Panc1 (cell line): ENCODE measurements at regions of chr15 and their contacts with region 1.

Region 1: DNA sequence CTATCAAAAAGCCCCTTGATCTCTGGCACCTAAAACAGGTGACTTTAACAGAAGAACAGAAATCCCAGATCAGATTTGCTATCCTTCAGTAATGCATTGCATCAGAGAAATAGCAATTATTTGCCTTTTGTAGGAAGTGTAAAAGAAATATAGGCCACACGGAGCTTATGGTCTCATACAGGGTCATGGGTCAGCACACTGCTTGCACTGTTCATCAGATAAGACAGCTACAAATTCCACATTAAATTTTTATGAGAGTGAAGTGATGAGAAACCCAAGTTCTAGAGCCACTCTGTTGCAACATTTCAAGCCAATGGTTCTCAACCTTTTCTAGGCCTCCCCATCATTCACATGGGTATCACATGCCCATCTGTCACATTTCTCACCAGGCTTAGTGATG is 33.4 kb upstream of the TMEM87A start:
- DNase-seq: no peak
- ATAC-seq: no peak
- H3K4me3 ChIP-seq: no peak overlapping the region
- H3K27ac ChIP-seq: no peak overlapping the region
- H3K4me1 ChIP-seq: no peaks in the 10 kb centered on the region
- H3K27me3 ChIP-seq: no peaks in the 10 kb centered on the region
- CTCF ChIP-seq: no peak

Region 2: GRCh38 chr15:42273102-42273899 is 33.4 kb before region 1 on chr15 and contains the starts of genes GANC and TMEM87A:
- CTCF ChIA-PET with region 1: no interaction called
- POLR2A ChIA-PET with region 1: interaction called, 14 read pairs
- in situ Hi-C with region 1: no loop called
- intact Hi-C with region 1: loop called (anchors 2 kb)
- DNase-seq: peak; percentile 97
- ATAC-seq: peak; percentile 98
- H3K4me3 ChIP-seq: peak within 1 kb of the TSS; percentile 66 to 93
- H3K27ac ChIP-seq: peak within 1 kb of the TSS; percentile 100
- H3K4me1 ChIP-seq: peaks cover 23% of the 10 kb centered on the region
- H3K27me3 ChIP-seq: no peaks in the 10 kb centered on the region
- CTCF ChIP-seq: no peak
- total RNA-seq, gene GANC: 21.1 TPM
- total RNA-seq, gene TMEM87A: 49.6 TPM

Region 3: GRCh38 chr15:43930079-43930478 is 1623.4 kb after region 1 on chr15:
- CTCF ChIA-PET with region 1: no interaction called
- POLR2A ChIA-PET with region 1: no interaction called
- in situ Hi-C with region 1: no loop called
- intact Hi-C with region 1: no loop called
- DNase-seq: no peak
- ATAC-seq: no peak; the same call in 1 of the 2 replicates
- H3K4me3 ChIP-seq: no peak overlapping the region
- H3K27ac ChIP-seq: no peak overlapping the region
- H3K4me1 ChIP-seq: peaks cover 8% of the 10 kb centered on the region
- H3K27me3 ChIP-seq: no peaks in the 10 kb centered on the region
- CTCF ChIP-seq: no peak